ENCODE measurements at regions of chr21 and their contacts with region 1.

Region 1: DNA sequence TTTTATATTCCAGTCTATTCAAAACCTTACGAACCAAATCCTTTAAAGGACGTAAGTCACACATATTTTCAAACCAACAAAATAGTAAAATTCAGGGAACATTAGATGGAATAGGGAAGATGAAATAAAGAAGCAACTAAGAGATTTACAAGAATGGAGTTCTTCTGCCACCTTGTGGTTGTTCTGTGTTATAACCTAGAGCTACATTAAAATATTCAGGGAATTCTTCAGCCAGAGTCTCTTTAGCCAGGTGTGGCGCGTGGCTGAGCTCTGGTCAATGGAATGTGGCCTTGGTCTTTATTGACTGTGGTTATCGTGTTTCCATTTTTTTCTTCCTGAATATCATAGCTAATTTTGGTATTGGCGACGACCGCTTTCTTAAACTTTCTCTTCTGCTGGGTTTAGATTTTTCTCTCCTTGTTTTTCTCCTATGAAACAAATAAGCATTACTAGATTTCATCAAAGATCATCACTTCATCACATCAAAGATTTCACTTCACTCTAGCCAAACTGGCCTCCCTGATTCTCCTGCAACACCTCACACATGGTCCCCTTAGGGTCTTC is 221.3 kb downstream of the MRPL39 start:
- DNase-seq: peak; percentile 53
- H3K27ac ChIP-seq: no peak overlapping the region
- CTCF ChIP-seq: peak; percentile 84

Region 2: GRCh38 chr21:25243808-25244207 is 142.2 kb before region 1 on chr21:
- CTCF ChIA-PET with region 1: no interaction called
- POLR2A ChIA-PET with region 1: no interaction called
- DNase-seq: no peak
- H3K27ac ChIP-seq: no peak overlapping the region
- CTCF ChIP-seq: no peak

Region 3: GRCh38 chr21:25283720-25284119 is 102.3 kb before region 1 on chr21:
- CTCF ChIA-PET with region 1: interaction called, 11 read pairs
- POLR2A ChIA-PET with region 1: no interaction called
- DNase-seq: peak; percentile 3
- H3K27ac ChIP-seq: no peak overlapping the region
- CTCF ChIP-seq: no peak

Region 4: DNA sequence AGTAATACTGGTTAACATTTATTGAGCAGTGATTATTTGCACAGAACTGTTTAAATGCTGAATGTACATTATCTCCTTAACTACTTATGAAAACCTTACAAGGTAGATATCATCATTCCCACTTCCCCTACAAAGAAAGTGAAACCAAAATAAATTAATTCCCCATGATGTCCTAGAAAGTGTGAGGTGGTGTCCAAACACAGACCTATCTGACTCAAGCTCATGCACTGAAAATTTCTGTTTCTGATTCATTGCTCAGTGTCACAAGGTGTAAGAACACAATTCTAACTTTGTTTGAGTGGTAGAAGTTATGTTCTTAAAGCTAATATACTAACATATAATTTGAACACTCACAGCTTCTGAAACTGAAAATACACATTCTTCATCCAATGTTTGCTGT is 42.5 kb after region 1 on chr21:
- CTCF ChIA-PET with region 1: no interaction called
- POLR2A ChIA-PET with region 1: no interaction called
- DNase-seq: no peak
- H3K27ac ChIP-seq: no peak overlapping the region
- CTCF ChIP-seq: no peak

Region 5: DNA sequence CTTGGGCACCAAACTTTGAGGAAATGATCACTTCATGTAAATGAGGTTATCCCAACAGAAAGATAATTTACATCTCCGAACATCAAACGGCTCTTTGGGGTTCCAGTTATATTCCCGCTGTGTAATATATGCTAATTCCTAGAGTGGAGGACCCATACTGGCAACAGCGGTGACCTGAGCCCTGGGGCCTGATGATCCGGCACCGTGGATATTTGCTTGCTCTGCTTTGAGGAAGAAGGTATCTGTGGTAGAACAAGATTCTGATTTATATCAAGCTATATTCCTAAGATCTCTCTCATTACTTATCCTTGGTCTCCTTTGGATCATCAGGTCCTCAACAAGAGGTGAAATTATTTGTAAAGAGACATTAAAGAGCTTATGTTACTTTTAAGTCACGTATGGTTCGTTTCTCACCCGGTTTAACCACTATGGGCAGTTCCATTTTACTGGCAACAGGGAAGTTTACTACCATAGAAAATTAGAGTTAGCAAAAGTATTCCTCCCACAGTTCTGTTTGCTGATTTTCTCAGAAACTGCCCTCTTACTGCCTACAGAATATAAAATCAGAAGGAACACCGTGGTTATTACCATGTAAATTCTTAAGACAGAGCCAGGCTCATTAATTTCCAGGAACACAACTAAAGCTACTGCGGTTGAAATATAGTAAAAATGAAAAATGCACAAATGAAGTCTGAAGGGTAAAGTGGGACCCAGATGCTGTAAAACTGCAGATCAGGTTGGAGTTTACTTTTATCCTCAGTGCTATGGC is 164.5 kb after region 1 on chr21:
- CTCF ChIA-PET with region 1: no interaction called
- POLR2A ChIA-PET with region 1: no interaction called
- DNase-seq: no peak
- H3K27ac ChIP-seq: no peak overlapping the region
- CTCF ChIP-seq: no peak